ENCODE measurements at regions of chr19 and their contacts with region 1.

Region 1: GRCh38 chr19:11987405-11988281 is 22.8 kb downstream of the ZNF763 start:
- DNase-seq: peak; percentile 97
- ATAC-seq: peak; percentile 96
- H3K4me3 Mint-ChIP-seq: peak overlapping the region; percentile 99
- H3K27ac Mint-ChIP-seq: peak overlapping the region; percentile 98
- H3K4me1 Mint-ChIP-seq: peaks cover 18% of the 10 kb centered on the region
- H3K27me3 Mint-ChIP-seq: no peaks in the 10 kb centered on the region

Region 2: DNA sequence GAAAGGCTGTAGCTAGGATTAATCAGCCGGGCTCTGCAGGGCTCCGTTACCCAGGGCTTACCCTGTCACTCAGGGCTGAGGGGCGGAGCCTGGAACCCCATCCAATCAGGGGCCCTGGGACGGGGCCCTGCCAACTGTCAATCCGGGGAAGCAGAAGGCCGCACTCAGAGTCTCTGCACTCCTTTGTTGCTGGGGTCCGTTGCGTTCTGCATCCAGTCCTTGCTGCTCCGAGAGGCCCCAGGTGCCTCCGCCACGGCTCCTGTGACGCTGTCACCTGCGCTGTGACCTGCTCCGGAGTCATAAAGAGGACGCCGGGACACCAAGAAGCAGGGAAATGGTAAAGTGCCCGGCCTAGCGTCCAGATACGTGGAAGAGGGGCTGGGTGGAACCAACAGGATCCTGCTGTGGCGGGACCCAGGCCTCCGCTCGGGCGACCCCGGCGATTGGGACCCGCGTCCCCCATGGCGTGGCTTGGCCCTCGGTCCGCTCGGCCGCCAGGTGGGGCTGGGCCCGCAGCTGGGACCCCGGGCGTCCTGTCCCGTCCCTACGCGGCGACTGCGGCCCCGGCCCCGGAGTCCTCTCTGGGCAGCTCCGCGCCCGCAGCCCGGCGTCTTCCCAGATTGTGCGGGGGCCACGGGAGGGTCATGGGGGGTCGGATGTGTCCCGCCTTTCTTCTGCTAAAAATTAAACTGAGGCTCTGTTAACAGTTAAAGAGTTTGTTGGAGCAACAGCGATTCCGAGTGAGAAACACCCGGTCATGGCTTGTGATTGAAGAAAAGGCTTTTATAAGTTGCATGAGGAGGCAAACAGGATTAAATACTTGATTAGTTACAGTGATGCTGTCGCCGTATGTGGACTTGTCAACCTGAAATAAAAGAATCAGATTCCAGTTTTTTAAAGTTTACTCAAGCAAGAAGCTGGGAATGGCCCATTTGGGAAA is 189.0 kb before region 1 on chr19 and contains the start of gene ZNF491:
- CTCF ChIA-PET with region 1: interaction called, 31 read pairs
- DNase-seq: peak; percentile 92
- ATAC-seq: peak; percentile 99
- H3K4me3 Mint-ChIP-seq: peak within 1 kb of the TSS; percentile 80
- H3K27ac Mint-ChIP-seq: peak within 1 kb of the TSS; percentile 78
- H3K4me1 Mint-ChIP-seq: peaks cover 14% of the 10 kb centered on the region
- H3K27me3 Mint-ChIP-seq: no peaks in the 10 kb centered on the region
- total RNA-seq, gene ZNF491: 0.96 to 1.7 TPM

Region 3: DNA sequence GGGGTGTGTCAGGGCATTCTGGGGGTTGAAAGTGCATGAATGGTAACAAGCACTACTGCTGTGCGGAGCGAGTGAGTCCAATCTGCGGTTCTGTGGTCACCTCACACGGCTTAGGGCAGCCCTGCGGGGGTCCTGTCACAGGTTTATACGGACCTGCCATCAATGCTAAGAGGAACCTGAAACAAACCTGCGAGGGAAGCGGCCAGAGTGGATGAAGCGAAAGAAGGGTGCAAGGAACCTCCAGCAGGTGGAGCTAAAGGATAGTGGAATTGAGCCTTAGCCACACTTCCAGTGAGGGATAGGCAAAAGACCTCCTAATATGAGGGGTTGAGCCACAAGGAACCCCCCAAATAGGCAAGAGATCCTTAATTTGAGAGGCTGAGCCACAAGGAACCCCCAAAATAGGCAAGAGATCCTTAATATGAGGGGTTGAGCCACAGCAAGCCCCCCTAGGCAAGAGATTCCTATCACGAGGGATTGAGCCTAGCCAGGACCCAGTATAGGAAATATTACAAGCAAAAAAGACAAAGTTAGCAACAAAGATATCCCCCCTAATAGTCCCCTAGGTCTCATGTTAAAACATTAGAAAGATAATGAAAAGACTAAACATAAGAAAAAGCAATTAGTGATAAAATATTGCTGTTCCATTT is 106.4 kb before region 1 on chr19:
- CTCF ChIA-PET with region 1: interaction called, 38 read pairs
- DNase-seq: peak; percentile 74
- ATAC-seq: peak; percentile 80
- H3K4me3 Mint-ChIP-seq: no peak overlapping the region
- H3K27ac Mint-ChIP-seq: no peak overlapping the region
- H3K4me1 Mint-ChIP-seq: peaks cover 2% of the 10 kb centered on the region
- H3K27me3 Mint-ChIP-seq: peaks cover 4% of the 10 kb centered on the region

Region 4: DNA sequence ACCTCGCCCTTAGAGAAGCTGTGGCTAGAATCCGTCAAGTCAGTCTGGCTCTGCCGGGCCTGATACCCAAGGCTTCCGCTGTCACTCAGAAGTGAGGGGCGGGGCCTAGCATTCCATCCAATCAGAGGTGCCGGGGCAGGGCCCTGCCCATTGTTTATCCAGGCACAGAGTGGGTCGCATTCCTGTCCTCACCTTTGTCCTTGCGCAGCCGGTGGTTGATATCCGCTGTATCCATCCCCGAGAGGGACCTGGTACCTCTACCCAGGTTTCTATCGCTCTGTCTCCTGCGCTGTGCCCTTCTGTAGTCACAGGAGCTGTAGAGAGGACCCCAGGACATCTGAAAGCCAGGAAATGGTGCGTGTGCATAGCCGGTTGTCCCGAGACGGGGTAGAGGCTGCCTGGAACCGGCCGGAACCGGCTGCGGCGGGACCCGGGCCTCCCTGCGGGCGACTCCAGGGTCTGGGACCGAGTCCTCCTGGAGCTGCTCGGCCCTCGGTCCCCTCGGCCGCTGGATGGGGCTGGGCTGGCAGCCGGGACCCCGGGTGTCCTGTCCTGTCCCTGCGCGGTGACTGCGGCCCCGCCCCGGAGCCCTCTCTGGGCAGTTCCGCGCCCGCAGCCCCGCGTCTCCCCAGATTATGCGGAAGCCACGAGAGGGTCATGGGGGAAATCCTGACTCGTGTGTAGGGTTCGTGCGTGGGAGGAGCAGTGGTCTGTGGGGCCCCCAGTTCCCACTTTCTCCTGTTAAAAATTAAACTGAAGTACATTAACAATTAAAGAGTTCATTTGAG is 22.6 kb before region 1 on chr19 and contains the start of gene ZNF763:
- CTCF ChIA-PET with region 1: interaction called, 53 read pairs
- DNase-seq: peak; percentile 95
- ATAC-seq: peak; percentile 97
- H3K4me3 Mint-ChIP-seq: peak within 1 kb of the TSS; percentile 86
- H3K27ac Mint-ChIP-seq: peak within 1 kb of the TSS; percentile 90
- H3K4me1 Mint-ChIP-seq: peaks cover 22% of the 10 kb centered on the region
- H3K27me3 Mint-ChIP-seq: no peaks in the 10 kb centered on the region
- total RNA-seq, gene ZNF763: 0.85 to 0.98 TPM

Region 5: DNA sequence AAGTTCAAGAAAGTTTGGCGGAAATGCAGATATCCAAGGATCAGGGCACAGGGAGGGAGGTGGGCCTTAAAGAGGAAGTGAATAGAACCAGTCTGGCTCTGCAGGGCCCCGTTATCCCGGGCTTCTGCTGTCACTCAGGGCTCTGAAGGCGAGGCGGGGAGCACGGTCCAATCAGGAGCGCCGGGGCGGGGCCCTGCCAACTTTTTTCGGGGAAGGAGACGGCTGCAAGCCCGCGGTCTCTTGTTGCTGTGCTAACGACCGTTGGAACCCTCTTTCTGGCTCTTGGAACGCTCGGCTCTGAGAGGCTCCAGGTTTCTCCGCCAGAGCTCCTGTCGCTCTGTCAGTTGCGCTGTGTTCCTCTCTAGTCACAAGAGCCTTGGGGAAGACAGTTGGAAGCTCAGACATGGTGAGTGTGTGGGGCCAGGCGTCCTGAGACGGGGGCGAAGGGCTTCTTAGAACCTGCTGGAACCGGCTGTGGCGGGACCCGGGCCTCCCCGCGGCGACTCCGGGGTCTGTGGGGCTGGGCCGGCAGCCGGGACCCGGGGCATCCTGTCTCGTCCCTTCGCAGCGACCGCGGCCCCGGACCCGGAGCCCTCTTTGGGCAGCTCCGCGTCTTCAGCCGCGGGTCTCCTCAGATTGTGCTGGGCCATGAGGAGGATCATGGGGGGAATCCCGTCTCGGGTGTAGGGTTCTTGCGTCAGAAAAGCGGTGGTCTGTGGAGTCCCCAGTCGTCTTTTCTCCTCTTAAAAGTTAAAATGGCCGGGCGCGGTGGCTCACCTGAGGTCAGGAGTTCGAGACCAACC is 104.6 kb after region 1 on chr19:
- CTCF ChIA-PET with region 1: interaction called, 10 read pairs
- DNase-seq: peak; percentile 84
- ATAC-seq: peak; percentile 94
- H3K4me3 Mint-ChIP-seq: peak overlapping the region; percentile 78
- H3K27ac Mint-ChIP-seq: peak overlapping the region; percentile 83
- H3K4me1 Mint-ChIP-seq: peaks cover 11% of the 10 kb centered on the region
- H3K27me3 Mint-ChIP-seq: no peaks in the 10 kb centered on the region

Measured in activated CD8-positive, alpha-beta memory T cell treated with anti-CD3 and anti-CD28 coated beads, Interleukin-2, amount 10 ng/mL, durations not matched to agents 7 days and 5 days (primary cell).